A673 (cell line): ENCODE measurements at regions of chr15 and their contacts with region 1.

Region 1: GRCh38 chr15:45253330-45253729 is 1.3 kb downstream of the SLC28A2 start:
- DNase-seq: peak; percentile 24
- H3K4me3 ChIP-seq: no peak overlapping the region
- H3K27ac ChIP-seq: no peak overlapping the region
- H3K4me1 ChIP-seq: no peaks in the 10 kb centered on the region
- H3K27me3 ChIP-seq: no peaks in the 10 kb centered on the region
- CTCF ChIP-seq: peak; percentile 54

Region 2: GRCh38 chr15:45314960-45315359 is 61.6 kb after region 1 on chr15:
- CTCF ChIA-PET with region 1: interaction called, 10 read pairs
- POLR2A ChIA-PET with region 1: no interaction called
- intact Hi-C with region 1: no loop called
- DNase-seq: peak; percentile 72
- H3K4me3 ChIP-seq: no peak overlapping the region
- H3K27ac ChIP-seq: no peak overlapping the region
- H3K4me1 ChIP-seq: no peaks in the 10 kb centered on the region
- H3K27me3 ChIP-seq: no peaks in the 10 kb centered on the region
- CTCF ChIP-seq: peak; percentile 58

Region 3: GRCh38 chr15:45338417-45338816 is 85.1 kb after region 1 on chr15:
- CTCF ChIA-PET with region 1: no interaction called
- POLR2A ChIA-PET with region 1: interaction called, 19 read pairs
- intact Hi-C with region 1: no loop called
- DNase-seq: no peak
- H3K4me3 ChIP-seq: no peak overlapping the region
- H3K27ac ChIP-seq: no peak overlapping the region
- H3K4me1 ChIP-seq: no peaks in the 10 kb centered on the region
- H3K27me3 ChIP-seq: no peaks in the 10 kb centered on the region
- CTCF ChIP-seq: no peak